HEK293T (cell line): ENCODE measurements at regions of chr17 and their contacts with region 1.

Region 1: GRCh38 chr17:18183334-18184142 is at the start of gene ALKBH5:
- DNase-seq: peak; percentile 99

Region 2: DNA sequence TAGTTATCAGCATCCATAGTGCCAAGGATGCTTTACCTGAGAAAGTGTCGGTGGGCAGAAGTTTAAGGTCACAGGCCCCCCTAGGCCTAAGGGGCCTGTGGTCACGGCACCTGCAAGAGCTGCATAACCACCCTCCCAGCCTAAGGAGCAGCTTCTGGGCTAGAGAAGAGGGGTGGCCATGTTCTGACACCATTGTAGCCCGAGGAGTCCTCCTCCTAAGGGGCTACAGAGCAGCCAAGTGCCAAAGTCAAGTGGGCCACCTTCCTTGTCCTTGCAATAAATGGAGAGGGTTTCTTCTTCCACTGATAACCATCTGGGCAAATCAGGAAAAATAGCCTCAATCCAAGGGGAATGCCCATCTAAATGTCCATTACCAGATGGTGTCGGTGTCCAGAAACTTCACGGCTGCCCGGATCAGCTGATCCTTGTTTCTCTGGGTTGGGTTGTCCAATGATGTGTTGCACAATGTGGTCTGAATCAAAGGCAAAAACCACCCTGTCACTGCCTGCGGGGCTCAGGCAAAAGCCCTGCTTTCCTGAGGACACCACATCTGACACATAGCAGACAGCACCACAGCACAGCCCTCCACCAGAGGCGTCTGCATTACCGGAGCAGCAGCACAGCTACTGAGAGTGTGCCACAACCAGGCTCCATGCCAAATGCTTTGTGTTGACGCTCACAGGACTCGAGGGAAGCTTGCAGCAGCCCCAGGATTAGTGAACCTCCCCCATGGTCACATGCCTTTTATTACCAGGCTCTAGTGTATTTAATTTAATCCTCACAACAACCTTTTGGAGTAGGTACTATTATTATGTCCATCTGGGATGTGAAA is 157.4 kb before region 1 on chr17:
- CTCF ChIA-PET with region 1: no interaction called
- POLR2A ChIA-PET with region 1: no interaction called
- DNase-seq: no peak

Region 3: DNA sequence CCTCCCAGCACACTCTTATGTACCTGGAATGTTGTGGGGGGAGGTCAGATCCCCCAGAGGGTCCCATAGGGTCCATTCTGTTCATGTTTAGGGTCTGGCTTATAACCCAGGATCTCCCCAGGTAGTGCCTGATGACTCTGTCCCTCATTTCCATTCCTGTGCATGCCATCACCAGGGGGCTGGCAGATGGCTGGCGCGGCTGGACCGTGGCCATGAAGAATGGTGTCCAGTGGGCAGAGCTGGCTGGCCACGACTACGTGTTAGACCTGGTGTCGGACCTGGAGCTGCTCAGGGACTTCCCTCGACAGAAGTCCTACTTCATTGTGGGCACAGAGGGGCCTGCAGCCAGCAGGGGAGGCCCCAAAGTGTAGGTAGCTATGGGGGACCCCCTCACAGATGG is 35.0 kb before region 1 on chr17:
- CTCF ChIA-PET with region 1: interaction called, 6 read pairs
- POLR2A ChIA-PET with region 1: interaction called, 44 read pairs
- DNase-seq: no peak

Region 4: GRCh38 chr17:18161207-18162145 is 22.1 kb before region 1 on chr17:
- CTCF ChIA-PET with region 1: interaction called, 3 read pairs
- POLR2A ChIA-PET with region 1: interaction called, 21 read pairs
- DNase-seq: no peak

Region 5: GRCh38 chr17:18172531-18173278 is 10.8 kb before region 1 on chr17:
- CTCF ChIA-PET with region 1: interaction called, 3 read pairs
- POLR2A ChIA-PET with region 1: interaction called, 57 read pairs
- DNase-seq: no peak

Region 6: DNA sequence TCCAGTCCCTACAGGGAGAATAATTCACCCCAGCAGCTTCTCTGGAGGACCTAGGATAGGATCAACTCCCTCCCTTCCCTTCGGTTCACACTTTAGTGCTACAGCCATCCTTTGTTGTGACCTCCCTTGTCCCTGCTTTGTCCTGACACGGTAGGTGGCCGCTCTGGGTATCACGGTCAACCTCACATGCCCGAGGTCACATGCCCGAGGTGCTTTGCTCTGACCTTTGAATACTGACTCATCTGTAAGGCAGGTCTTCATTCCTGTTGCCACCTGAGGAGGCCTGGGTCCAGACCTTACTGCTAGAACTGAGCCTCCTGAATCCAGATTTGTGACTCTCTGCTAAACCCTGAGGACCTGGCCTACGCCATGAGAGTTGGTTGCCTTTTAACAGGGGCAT is 19.8 kb after region 1 on chr17:
- CTCF ChIA-PET with region 1: no interaction called
- POLR2A ChIA-PET with region 1: interaction called, 11 read pairs
- DNase-seq: no peak